Activated CD4-positive, alpha-beta T cell treated with anti-CD3 and anti-CD28 coated beads for 36 hours (primary cell): ENCODE measurements at regions of chr18 and their contacts with region 1.

Region 1: DNA sequence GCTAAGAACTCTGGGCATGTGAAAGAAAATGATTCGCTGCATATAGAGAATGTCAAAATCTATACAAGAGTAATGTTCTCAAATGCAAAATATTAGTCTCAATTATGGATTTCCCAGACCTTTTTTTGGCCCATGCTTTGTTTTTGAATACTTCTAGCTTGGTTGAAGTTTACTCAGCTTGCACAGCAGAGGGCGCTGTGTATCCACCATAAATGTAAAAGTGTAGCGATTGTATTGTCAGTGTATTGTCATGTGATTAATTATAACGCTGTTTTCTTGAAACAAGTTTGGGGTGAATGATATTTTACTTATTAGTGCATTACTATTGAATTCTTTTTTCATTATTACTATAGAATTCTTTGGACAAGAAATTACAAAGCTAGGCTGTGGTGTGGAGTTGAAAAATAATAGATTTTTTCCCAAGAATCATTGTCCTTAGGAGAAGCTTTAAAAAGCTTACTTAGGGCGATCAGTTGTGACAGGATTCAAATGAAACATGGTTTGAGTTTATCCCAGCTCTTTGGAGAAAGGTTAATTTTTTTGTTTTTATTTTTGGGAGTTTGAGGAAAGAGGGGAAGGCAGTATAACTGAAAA is 98.3 kb downstream of the PIK3C3 start:
- DNase-seq: peak; percentile 81
- ATAC-seq: peak; percentile 80
- H3K4me3 Mint-ChIP-seq: no peak overlapping the region
- H3K27ac Mint-ChIP-seq: no peak overlapping the region
- H3K4me1 Mint-ChIP-seq: peaks cover 15% of the 10 kb centered on the region
- H3K27me3 Mint-ChIP-seq: no peaks in the 10 kb centered on the region

Region 2: GRCh38 chr18:42028247-42028832 is 24.9 kb before region 1 on chr18:
- CTCF ChIA-PET with region 1: interaction called, 23 read pairs
- POLR2A ChIA-PET with region 1: no interaction called
- intact Hi-C with region 1: no loop called
- DNase-seq: peak; percentile 47
- ATAC-seq: no peak
- H3K4me3 Mint-ChIP-seq: no peak overlapping the region
- H3K27ac Mint-ChIP-seq: no peak overlapping the region
- H3K4me1 Mint-ChIP-seq: peaks cover 28% of the 10 kb centered on the region
- H3K27me3 Mint-ChIP-seq: no peaks in the 10 kb centered on the region

Region 3: DNA sequence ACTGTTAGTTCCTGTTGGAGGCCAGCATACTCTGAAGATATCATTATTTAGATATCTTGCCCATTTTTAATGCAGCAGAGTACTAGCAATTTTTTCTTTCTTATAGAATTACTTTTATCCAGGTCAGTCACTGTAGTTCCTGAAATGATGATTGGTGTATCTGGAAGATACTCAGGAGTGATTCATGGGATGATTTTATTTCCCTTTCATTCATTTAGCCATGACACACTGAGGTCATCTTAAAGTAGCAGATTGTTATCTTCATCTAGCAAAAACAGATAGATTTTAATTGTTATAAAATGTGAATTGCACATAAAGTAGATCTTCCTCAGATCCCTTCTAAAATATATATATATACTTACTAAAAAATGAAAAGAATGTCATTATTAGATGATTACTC is 10.8 kb after region 1 on chr18:
- CTCF ChIA-PET with region 1: interaction called, 27 read pairs
- POLR2A ChIA-PET with region 1: no interaction called
- intact Hi-C with region 1: no loop called
- DNase-seq: no peak
- ATAC-seq: no peak
- H3K4me3 Mint-ChIP-seq: no peak overlapping the region
- H3K27ac Mint-ChIP-seq: no peak overlapping the region
- H3K4me1 Mint-ChIP-seq: no peaks in the 10 kb centered on the region
- H3K27me3 Mint-ChIP-seq: no peaks in the 10 kb centered on the region

Region 4: GRCh38 chr18:42298759-42299675 is 245.7 kb after region 1 on chr18:
- CTCF ChIA-PET with region 1: no interaction called
- POLR2A ChIA-PET with region 1: no interaction called
- intact Hi-C with region 1: loop called in 1 of 2 experiments (anchors 2 kb)
- DNase-seq: peak; percentile 77
- ATAC-seq: no peak
- H3K4me3 Mint-ChIP-seq: no peak overlapping the region
- H3K27ac Mint-ChIP-seq: no peak overlapping the region
- H3K4me1 Mint-ChIP-seq: no peaks in the 10 kb centered on the region
- H3K27me3 Mint-ChIP-seq: peaks cover 6% of the 10 kb centered on the region

Region 5: GRCh38 chr18:43563780-43564179 is 1510.5 kb after region 1 on chr18:
- CTCF ChIA-PET with region 1: no interaction called
- POLR2A ChIA-PET with region 1: no interaction called
- intact Hi-C with region 1: loop called in 1 of 2 experiments (anchors 10 kb)
- DNase-seq: no peak
- ATAC-seq: no peak
- H3K4me3 Mint-ChIP-seq: no peak overlapping the region
- H3K27ac Mint-ChIP-seq: no peak overlapping the region
- H3K4me1 Mint-ChIP-seq: no peaks in the 10 kb centered on the region
- H3K27me3 Mint-ChIP-seq: no peaks in the 10 kb centered on the region